Cardiac septum (tissue), 1 donor: ENCODE measurements at regions of chr11 and their contacts with region 1.

Region 1: DNA sequence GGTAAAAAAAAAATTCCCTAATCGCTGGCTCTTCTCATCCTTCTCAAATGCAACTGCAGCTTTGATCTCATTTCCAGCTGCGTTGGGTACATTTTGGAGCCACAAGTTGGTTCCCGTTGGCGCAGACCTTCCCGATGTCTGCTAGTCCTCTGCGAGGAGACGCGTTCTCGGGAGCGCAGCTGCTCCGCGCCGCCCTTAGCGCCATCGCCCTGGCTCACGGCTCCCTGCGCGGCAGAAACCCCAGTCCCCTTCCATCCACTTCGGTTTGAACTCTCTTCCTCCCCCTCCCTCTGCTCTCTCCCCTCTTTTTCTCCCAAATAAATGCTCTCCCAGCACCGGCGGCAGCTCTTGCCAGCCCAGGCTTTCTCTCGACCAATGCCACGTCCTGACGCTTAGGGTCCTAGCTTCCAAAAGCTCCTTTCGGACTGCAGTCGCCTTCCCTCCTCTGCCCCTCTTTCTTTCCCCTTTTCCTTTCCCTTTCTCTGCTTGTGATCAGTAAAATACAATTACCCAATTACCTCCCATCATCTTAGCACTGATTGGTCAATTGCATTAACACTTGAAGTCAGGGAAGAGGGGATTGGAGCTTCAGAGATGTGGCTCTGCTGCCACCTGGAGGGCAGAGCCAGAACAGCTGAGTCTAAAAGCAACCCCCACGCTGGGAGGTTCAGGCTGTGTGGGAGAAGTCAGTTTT is 1165.7 kb downstream of the LRRC4C start:
- DNase-seq: no peak

Region 2: DNA sequence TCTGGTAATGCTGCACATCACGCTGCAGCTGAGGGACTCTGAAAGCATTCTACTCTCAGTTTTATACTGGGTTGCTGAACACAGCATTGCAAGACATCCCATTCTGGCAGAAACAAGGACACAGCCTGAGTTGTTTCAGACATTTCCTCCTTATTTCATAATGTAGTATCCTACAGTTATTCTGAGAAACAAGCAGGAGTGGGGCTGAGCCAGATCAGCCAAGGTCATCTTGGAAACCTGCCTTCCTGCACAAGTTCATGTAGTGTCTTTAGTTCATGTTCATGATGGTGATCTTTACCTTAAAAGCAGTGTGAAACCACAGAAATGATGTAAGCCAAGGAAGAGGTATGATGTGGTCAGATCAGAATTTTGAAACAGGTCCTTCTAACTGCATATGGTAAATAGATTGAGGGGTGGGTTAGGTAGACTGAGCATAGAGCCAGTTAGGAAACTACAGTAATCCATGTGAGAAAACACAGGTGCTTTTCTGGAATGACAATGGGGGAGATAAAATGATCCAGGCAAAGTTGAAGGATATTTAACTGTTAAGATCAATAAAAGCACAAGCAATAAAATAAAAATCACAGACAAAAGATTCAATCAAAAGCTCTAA is 521.2 kb before region 1 on chr11:
- intact Hi-C with region 1: no loop called
- DNase-seq: no peak

Region 3: GRCh38 chr11:40130427-40130826 is 163.4 kb before region 1 on chr11:
- intact Hi-C with region 1: loop called (anchors 10 kb)
- DNase-seq: no peak